ENCODE measurements at regions of chr14 and their contacts with region 1.

Region 1: DNA sequence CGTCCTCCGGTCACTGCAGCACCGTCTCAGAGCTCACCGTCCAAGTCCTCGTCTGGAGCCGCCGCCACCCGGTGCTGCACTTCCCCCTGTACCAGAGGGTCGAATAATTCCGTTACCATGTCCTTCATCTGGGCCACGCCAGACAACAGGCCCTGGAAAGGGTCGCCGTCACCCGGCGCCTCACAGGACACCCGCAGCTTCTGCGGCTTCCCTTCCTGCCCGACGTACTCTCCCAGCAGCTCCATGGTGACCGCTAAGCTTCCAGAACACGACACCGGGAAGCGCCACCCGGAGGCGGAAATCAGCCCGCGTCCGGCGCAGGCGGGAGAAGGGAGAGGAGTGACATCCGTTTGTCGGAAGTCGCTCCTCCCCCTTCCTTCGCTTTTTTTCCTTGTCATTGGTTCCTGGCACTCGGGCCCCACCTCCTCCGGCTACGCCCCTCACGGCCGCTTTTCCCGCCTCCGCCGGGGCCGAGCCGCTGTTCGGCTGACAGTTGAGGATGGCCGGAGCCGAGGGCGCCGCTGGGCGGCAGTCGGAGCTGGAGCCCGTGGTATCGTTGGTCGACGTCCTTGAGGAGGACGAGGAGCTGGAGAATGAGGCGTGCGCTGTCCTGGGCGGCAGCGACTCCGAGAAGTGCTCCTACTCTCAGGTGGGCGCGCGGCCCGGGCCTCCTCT is at the starts of genes GON7 and UBR7:
- DNase-seq: peak; percentile 97
- H3K4me3 ChIP-seq: peak within 1 kb of the TSS; percentile 77 to 88 (median 77)
- H3K27ac ChIP-seq: peak within 1 kb of the TSS; percentile 79
- H3K4me1 ChIP-seq: peaks cover 12% of the 10 kb centered on the region
- H3K27me3 ChIP-seq: no peaks in the 10 kb centered on the region
- CTCF ChIP-seq: peak in 1 of 2 donors; percentile 12
- POLR2A ChIP-seq: peak; percentile 76
- total RNA-seq, gene GON7: 11.1 and 11.5 TPM in 2 replicates
- total RNA-seq, gene UBR7: 22.2 and 24.1 TPM in 2 replicates

Region 2: DNA sequence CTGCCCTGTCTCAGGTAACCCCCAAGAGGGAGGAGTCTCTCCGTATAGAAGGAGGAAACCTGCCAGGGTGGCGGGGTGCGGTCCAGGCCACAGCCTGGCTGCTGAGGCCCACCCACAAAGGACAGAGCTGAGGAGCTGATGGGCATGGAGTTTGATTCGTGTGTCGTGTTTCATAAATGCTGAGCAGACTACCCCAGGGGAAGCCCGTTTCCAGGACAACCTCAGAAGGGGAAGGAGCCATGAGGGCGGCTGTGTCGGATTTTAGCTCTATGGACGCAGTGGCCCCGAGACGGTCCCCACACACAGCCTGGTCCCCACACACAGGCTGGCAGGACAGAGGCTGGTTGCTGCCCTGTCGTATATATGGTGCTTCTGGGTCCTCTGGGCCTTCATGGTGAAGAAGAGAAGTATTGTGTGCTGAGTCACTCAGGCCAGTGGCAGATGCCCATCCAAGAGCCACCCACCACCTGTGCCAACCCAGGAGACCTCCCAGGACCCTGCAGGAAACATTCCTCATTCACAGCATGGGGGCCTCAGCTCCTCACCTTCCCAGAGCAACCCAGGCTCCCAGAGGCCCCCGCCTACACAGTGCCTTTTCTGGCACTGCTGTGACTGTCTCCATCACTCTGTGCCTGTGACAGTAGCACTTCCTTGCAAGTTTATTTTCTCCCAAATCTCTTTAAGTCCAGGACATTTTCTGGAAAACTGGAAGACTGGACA is 756.4 kb before region 1 on chr14:
- CTCF ChIA-PET with region 1: no interaction called
- POLR2A ChIA-PET with region 1: no interaction called
- dilution Hi-C with region 1: no loop called
- intact Hi-C with region 1: no loop called
- DNase-seq: no peak
- H3K4me3 ChIP-seq: no peak overlapping the region
- H3K27ac ChIP-seq: no peak overlapping the region
- H3K4me1 ChIP-seq: no peaks in the 10 kb centered on the region
- H3K27me3 ChIP-seq: no peaks in the 10 kb centered on the region
- CTCF ChIP-seq: no peak
- POLR2A ChIP-seq: no peak

Region 3: GRCh38 chr14:92963301-92964123 is 243.4 kb before region 1 on chr14:
- CTCF ChIA-PET with region 1: no interaction called
- POLR2A ChIA-PET with region 1: no interaction called
- dilution Hi-C with region 1: no loop called
- intact Hi-C with region 1: no loop called
- DNase-seq: no peak
- H3K4me3 ChIP-seq: no peak overlapping the region
- H3K27ac ChIP-seq: no peak overlapping the region
- H3K4me1 ChIP-seq: peaks cover 8% of the 10 kb centered on the region
- H3K27me3 ChIP-seq: no peaks in the 10 kb centered on the region
- CTCF ChIP-seq: no peak
- POLR2A ChIP-seq: no peak

Region 4: DNA sequence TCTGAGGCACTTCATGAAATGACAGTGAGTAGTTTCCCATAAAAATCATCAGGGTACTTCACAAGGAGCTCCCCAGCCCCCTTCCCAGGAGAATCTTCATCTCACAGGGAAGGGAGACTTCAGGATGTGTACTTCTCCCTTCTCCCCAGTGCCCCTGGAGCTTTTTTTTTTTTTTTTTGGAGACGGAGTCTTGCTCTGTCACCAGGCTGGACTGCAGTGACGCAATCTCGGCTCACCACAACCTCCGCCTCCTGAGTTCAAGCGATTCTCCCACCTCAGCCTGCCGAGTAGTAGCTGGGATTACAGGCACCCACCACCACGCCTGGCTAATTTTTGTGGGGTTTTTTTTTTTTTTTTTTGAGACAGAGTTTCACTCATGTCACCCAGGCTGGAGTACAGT is 101.6 kb before region 1 on chr14:
- CTCF ChIA-PET with region 1: no interaction called
- POLR2A ChIA-PET with region 1: no interaction called
- dilution Hi-C with region 1: no loop called
- intact Hi-C with region 1: no loop called
- DNase-seq: no peak
- H3K4me3 ChIP-seq: no peak overlapping the region
- H3K27ac ChIP-seq: no peak overlapping the region
- H3K4me1 ChIP-seq: no peaks in the 10 kb centered on the region
- H3K27me3 ChIP-seq: no peaks in the 10 kb centered on the region
- CTCF ChIP-seq: no peak
- POLR2A ChIP-seq: no peak

Region 5: DNA sequence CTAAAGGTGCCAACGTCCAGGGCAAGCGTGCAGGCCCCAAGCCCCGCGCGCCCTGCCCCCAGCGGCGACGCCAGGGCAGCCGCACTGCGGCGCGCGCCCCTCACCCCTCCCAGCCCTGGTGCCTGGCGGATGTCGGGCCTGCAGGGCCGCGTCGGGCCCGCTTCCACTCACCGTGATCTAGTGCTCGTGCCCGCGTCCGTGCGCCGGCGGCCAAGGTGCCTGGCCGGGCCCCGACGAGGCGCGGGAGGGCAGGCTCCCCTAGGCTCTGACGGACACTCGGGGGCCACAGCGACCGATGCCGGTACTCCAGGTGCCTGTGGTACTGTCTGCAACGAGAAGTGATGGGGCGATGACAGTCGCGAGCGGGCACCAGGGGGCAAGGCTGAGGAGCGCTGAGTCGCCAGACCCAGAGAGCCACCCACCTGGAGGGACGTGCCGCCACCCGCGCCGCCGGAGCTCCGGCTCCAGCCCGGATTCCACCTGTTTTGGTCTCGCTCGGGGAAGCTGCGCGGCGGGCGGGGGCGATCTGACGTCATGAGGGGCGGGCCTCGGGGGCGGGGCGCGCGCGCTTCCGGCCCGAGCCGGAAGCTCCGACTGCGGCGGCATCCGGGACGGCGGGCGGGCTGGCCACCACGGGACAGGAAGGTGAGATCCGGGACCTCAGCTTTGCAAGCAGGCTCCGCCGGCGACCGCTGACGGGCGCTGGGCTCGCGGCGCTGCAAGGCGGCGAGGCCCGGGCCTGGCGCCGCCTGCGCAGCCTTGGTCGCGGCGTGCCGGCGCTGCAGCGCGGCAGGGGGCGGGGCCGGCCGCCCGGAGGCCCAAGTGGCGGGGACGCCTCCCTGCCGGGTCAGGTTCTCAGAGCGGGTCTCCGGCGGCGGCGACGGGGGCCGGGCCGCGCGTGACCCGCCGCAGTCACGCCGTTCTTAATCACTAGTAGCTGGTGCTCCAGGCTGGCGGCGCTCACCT is 22.3 kb before region 1 on chr14 and contains the starts of genes LYSET and MOAP1:
- CTCF ChIA-PET with region 1: interaction called, 33 read pairs
- POLR2A ChIA-PET with region 1: interaction called, 8 read pairs
- dilution Hi-C with region 1: no loop called
- intact Hi-C with region 1: loop called (anchors 1 kb)
- DNase-seq: peak; percentile 88
- H3K4me3 ChIP-seq: peak within 1 kb of the TSS; percentile 58 to 98 (median 96)
- H3K27ac ChIP-seq: peak within 1 kb of the TSS; percentile 98
- H3K4me1 ChIP-seq: peaks cover 21% of the 10 kb centered on the region
- H3K27me3 ChIP-seq: no peaks in the 10 kb centered on the region
- CTCF ChIP-seq: peak in 1 of 2 donors; percentile 27
- POLR2A ChIP-seq: peak; percentile 91
- total RNA-seq, gene LYSET: 18.4 and 18.8 TPM in 2 replicates
- total RNA-seq, gene MOAP1: 15.0 and 16.6 TPM in 2 replicates

Region 6: GRCh38 chr14:93332853-93333630 is 126.1 kb after region 1 on chr14 and contains the start of gene BTBD7:
- CTCF ChIA-PET with region 1: interaction called, 13 read pairs
- POLR2A ChIA-PET with region 1: interaction called, 3 read pairs
- dilution Hi-C with region 1: no loop called
- intact Hi-C with region 1: loop called (anchors 1 kb)
- DNase-seq: peak; percentile 97
- H3K4me3 ChIP-seq: peak within 1 kb of the TSS; percentile 82 to 95 (median 94)
- H3K27ac ChIP-seq: peak within 1 kb of the TSS; percentile 82
- H3K4me1 ChIP-seq: peaks cover 26% of the 10 kb centered on the region
- H3K27me3 ChIP-seq: no peaks in the 10 kb centered on the region
- CTCF ChIP-seq: peak in 1 of 2 donors; percentile 19
- POLR2A ChIP-seq: peak; percentile 63
- total RNA-seq, gene BTBD7: 47.8 and 50.2 TPM in 2 replicates

Region 7: GRCh38 chr14:93543766-93544165 is 336.8 kb after region 1 on chr14:
- CTCF ChIA-PET with region 1: interaction called, 9 read pairs
- POLR2A ChIA-PET with region 1: no interaction called
- dilution Hi-C with region 1: no loop called
- intact Hi-C with region 1: loop called (anchors 1 kb)
- DNase-seq: peak; percentile 23
- H3K4me3 ChIP-seq: no peak overlapping the region
- H3K27ac ChIP-seq: no peak overlapping the region
- H3K4me1 ChIP-seq: no peaks in the 10 kb centered on the region
- H3K27me3 ChIP-seq: no peaks in the 10 kb centered on the region
- CTCF ChIP-seq: peak; percentile 15 to 18
- POLR2A ChIP-seq: no peak

Region 8: DNA sequence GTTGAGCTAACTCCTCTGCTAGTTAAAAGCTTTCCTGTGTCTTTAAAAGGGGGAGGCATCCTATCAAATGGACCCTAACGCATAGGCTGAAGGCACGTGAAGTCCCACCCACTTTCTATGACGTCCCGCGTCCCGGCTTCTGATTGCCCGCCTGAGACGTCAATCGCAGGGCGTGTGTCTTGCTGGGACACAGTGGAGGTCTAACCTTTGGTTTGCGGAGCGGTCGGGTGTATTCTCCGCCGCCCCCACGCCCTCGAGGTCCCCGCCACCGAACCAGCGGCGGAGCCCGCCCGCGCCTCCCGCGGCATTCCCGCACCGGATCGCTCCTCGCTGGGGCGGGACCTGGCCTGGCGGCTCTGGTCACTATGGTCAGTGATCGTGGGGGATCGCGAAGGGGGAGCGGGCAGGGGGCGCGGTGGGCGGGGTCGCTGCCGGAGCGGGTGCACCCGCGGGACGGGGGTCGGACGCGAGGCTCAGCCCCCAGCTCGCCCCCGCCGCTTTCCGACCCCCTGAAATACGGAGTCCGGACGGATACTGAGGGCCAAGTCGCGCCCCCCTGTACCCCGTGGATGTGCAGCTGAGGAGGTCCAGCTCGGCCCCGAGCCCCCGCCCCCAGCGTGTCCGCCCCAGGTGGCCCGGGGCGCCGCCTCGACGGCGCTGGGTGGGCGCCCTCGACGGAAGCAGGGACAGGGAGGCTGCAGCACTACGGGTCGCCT is 819.4 kb after region 1 on chr14 and contains the start of gene OTUB2:
- CTCF ChIA-PET with region 1: no interaction called
- POLR2A ChIA-PET with region 1: no interaction called
- dilution Hi-C with region 1: no loop called
- intact Hi-C with region 1: loop called (anchors 1 kb)
- DNase-seq: peak; percentile 99
- H3K4me3 ChIP-seq: peak within 1 kb of the TSS in 2 of 3 experiments; percentile 29 to 50
- H3K27ac ChIP-seq: no peak within 1 kb of the TSS
- H3K4me1 ChIP-seq: peaks cover 10% of the 10 kb centered on the region
- H3K27me3 ChIP-seq: peaks cover 0 to 4% of the 10 kb centered on the region in 2 experiments
- CTCF ChIP-seq: no peak
- POLR2A ChIP-seq: no peak
- total RNA-seq, gene OTUB2: 1.1 and 1.6 TPM in 2 replicates